ENCODE measurements at regions of chr9 and their contacts with region 1.

Region 1: DNA sequence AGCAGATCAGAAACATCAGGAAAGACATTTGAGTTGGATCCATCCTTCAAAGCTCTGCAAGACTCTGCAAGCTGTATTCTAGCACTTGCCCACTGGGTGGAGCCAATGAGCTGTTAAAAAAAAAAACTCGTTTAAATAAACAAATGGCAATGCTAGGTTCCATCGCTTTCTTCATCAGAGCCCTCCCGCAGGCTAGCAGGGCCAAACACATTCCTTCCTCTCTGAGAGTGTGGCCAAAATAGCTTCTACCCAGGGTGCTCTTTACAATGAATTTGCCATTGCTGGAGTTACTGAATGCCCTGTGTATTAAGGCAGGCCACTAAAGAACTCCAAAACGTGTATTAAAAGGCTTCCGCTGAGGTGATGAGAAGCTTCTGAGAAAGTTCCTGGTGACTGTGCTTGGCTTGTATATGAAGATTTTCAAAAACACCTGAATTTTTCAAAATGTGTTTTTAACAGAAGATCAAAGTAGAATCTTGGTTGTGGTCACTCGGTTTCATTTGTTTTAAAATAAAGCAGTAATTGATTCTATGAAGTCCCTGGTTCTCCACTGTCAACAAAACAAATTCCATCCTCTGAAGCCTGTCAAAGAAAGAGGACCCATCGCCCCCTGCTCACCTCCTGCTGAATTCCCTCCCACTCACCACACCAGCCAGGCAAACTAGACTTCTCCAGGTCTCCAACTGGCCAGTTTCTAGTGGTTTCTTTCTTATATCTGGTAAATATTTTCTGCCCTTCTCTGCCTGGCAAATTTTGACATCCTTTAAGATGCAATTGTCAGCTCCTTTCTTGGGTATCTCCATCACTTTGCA is 36.5 kb upstream of the EQTN start:
- DNase-seq: peak; percentile 35
- ATAC-seq: no peak
- H3K4me3 ChIP-seq: no peak overlapping the region
- H3K27ac ChIP-seq: no peak overlapping the region
- H3K4me1 ChIP-seq: no peaks in the 10 kb centered on the region
- H3K27me3 ChIP-seq: no peaks in the 10 kb centered on the region
- CTCF ChIP-seq: peak; percentile 57

Region 2: DNA sequence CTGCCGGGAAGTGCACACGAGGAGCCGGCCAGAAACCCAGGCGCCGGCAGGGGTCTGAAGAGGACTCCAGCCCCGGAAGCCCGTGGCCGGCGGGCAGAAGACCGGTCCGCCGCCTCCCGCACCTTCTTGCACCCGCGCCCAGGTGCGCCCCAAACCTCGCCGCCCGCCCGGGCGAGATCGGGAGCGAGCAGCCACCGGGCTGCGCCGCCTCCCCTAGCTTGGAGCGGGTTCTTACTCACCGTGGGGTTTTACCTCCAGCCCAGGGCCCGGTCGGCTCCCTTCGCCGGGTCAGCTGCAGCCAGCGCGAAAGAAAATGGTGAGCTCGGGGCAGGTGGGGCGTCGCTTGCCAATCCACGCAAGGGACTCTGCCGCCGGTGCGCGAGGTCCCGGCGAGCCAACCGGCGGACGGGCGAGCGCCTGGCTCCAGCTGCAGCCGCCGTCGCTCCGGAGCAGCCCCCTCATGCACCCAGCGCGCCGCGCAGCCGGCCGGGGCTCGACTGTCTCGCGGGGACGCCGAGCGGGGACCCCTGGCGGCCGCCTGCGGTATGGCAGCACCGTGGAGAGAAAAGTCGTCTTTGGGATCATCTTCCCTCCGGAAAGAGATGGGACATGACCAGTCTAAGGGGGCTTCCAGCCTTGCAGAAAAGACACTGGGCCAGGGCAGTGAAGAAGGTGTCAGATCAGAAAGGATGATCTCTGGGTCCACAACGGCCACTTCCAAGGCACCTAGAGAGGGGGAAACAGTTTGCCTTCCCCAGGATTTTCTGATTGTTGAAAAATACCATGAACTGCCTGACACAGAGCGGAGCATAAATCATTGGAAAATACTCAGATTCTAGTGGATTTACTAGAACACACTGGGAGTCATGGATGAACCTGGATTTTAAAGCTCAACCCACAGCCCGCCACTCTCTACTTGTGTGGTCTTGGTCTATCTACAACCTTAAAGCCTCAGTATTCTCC is 196.2 kb after region 1 on chr9 and contains the start of gene MOB3B:
- CTCF ChIA-PET with region 1: no interaction called
- POLR2A ChIA-PET with region 1: no interaction called
- in situ Hi-C with region 1: no loop called
- intact Hi-C with region 1: loop called (anchors 5 kb)
- DNase-seq: no peak
- ATAC-seq: peak; percentile 88
- H3K4me3 ChIP-seq: peak within 1 kb of the TSS; percentile 33 to 40
- H3K27ac ChIP-seq: no peak within 1 kb of the TSS
- H3K4me1 ChIP-seq: no peaks in the 10 kb centered on the region
- H3K27me3 ChIP-seq: no peaks in the 10 kb centered on the region
- CTCF ChIP-seq: peak; percentile 75
- total RNA-seq, gene MOB3B: 0.03 TPM

Region 3: GRCh38 chr9:27626244-27627187 is 293.1 kb after region 1 on chr9:
- CTCF ChIA-PET with region 1: no interaction called
- POLR2A ChIA-PET with region 1: no interaction called
- in situ Hi-C with region 1: no loop called
- intact Hi-C with region 1: no loop called
- DNase-seq: no peak
- ATAC-seq: peak; percentile 56
- H3K4me3 ChIP-seq: no peak overlapping the region
- H3K27ac ChIP-seq: no peak overlapping the region
- H3K4me1 ChIP-seq: no peaks in the 10 kb centered on the region
- H3K27me3 ChIP-seq: no peaks in the 10 kb centered on the region
- CTCF ChIP-seq: no peak